Activated T-helper 1 cell treated with anti-CD3 and anti-CD28 coated beads, Interleukin-12 subunit alpha, Interleukin-12 subunit beta, Interleukin-2, Interleukin-4 antibody, amounts not matched to agents 30 ng/mL and 10 ng/mL and 1 ng/mL, durations not matched to agents 14 hours and 24 hours and 36 hours (primary cell): ENCODE measurements at regions of chr1 and their contacts with region 1.

Region 1: GRCh38 chr1:161531986-161532643 is 7.8 kb downstream of the HSPA6 start:
- DNase-seq: no peak
- H3K4me3 Mint-ChIP-seq: peak overlapping the region; percentile 22
- H3K27ac Mint-ChIP-seq: peak overlapping the region; percentile 58
- H3K4me1 Mint-ChIP-seq: peaks cover 23% of the 10 kb centered on the region
- H3K27me3 Mint-ChIP-seq: peaks cover 18% of the 10 kb centered on the region

Region 2: GRCh38 chr1:160307118-160307854 is 1224.8 kb before region 1 on chr1:
- intact Hi-C with region 1: no loop called
- DNase-seq: no peak
- H3K4me3 Mint-ChIP-seq: no peak overlapping the region
- H3K27ac Mint-ChIP-seq: no peak overlapping the region
- H3K4me1 Mint-ChIP-seq: no peaks in the 10 kb centered on the region
- H3K27me3 Mint-ChIP-seq: no peaks in the 10 kb centered on the region

Region 3: DNA sequence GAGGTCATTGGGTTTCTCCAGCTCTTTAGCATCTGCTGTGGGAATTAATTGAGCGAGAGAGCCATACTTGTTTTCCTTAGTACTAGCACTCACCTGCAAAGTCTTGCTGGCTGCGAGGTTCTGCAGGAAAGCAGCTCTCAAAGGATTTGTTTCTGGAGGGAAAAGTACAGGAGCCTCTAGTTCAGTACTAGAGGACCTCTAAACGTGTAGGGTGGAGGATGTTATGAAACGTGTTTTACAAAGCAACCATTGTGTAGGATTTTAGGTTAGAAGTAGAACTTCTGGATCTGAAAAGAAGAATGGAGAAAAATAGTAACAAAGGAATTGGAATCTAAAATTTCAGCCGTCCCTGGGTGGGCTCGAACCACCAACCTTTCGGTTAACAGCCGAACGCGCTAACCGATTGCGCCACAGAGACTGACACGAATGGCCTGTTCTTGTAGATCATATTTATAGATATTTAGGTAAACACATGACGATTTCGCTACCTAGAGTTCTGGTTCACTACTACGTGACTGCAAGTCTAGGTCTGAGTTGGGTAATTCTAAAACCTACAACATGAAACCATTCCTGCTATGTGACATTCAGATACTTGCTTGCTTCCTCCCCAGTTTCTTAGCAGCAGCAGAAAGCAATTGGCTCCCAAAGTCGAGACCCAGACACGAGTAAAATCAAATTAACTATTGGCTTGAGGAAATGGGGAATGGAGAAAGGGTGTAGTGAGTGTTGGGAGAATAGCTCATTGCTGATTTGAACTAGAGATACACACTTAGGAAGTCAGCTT is 104.2 kb before region 1 on chr1:
- intact Hi-C with region 1: loop called (anchors 10 kb)
- DNase-seq: peak; percentile 22
- H3K4me3 Mint-ChIP-seq: peak overlapping the region; percentile 25
- H3K27ac Mint-ChIP-seq: peak overlapping the region; percentile 73
- H3K4me1 Mint-ChIP-seq: peaks cover 15% of the 10 kb centered on the region
- H3K27me3 Mint-ChIP-seq: peaks cover 35% of the 10 kb centered on the region

Region 4: GRCh38 chr1:161486806-161487741 is 45.0 kb before region 1 on chr1:
- intact Hi-C with region 1: loop called (anchors 10 kb)
- DNase-seq: peak; percentile 18
- H3K4me3 Mint-ChIP-seq: no peak overlapping the region
- H3K27ac Mint-ChIP-seq: no peak overlapping the region
- H3K4me1 Mint-ChIP-seq: peaks cover 16% of the 10 kb centered on the region
- H3K27me3 Mint-ChIP-seq: peaks cover 54% of the 10 kb centered on the region

Region 5: DNA sequence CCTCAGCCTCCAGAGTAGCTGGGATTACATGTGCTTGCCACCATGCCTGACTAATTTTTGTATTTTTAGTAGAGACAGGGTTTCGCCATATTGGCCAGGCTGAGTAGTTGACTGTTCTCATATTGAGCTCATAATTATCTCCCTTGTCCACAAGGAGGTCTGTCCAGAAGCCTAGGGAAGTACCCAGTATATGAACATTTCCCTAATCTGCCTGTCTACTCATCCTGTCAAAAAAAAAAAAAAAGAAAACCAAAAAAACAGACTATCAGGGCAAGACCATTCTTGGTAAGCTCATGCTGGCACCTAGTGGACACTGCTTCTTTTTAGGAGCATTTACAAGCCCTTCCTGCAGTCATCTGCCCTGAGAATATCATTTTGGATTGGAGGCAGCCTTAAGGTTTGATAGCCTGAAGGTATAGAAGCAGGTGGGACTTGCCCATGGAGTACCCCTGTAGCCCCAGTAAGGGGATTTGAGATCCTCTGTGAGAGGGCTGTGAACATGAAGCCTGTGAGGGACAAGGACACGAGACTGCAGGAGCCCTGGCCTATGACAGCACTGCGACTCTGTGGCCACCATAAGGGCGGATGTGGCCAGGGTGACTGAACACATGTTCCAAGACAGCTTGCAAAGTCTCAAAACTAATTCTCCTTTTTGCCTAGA is 206.6 kb after region 1 on chr1:
- intact Hi-C with region 1: loop called (anchors 1 kb)
- DNase-seq: peak; percentile 54
- H3K4me3 Mint-ChIP-seq: no peak overlapping the region
- H3K27ac Mint-ChIP-seq: peak overlapping the region; percentile 20
- H3K4me1 Mint-ChIP-seq: peaks cover 41% of the 10 kb centered on the region
- H3K27me3 Mint-ChIP-seq: peaks cover 29% of the 10 kb centered on the region